ENCODE measurements at regions of chr5 and their contacts with region 1.

Region 1: DNA sequence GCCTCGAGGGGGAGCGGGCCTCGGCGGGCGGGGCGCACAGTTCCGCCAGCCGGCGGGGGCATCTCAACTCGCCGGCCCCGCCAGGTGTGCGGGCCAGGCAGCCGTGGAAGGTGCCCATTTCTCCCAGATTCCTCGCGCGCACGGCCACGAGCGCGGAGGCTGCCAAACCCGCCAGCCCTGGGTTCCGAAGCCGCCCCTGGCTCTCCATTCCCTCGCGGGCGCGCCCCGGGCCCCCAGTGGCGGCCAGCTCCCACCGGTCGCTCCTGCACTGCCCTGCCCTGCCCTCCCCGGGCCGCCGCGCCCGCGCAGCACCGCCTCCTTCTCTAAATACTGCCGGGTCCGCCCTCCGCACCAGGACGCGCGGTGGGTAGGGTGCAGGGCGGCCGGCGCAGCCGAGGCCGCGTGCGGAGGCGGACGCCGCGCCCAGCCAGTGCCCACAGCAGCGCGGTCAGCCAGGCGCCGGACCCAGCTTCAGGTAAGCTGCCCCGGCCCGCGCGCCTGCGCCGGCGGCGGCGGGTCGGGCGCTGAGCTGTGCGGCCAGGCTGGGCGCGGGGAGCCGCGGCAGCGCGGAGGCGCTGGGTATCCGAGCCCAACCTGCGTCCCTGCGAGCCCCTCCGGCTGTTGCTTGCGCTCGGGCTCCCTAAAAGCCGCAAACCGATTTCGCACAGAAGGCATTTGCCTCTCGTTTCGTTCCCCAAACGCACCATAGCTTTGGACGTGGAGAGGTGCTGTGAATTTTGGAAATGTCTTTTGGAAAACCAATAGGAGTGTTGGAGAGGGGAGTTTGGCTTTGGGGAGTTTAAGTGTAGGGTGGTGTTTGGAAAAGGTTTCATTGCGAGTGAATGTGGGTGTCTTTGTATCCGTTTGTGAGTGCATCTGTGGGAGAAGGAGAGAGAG is at the start of gene TMEM171:
- DNase-seq: peak; percentile 66 to 79
- H3K4me3 ChIP-seq: peak within 1 kb of the TSS; percentile 100
- H3K27ac ChIP-seq: peak within 1 kb of the TSS; percentile 92
- H3K4me1 ChIP-seq: peaks cover 47% of the 10 kb centered on the region
- H3K27me3 ChIP-seq: no peaks in the 10 kb centered on the region
- CTCF ChIP-seq: no peak
- total RNA-seq, gene TMEM171: 7.8 and 9.9 TPM in 2 replicates

Region 2: DNA sequence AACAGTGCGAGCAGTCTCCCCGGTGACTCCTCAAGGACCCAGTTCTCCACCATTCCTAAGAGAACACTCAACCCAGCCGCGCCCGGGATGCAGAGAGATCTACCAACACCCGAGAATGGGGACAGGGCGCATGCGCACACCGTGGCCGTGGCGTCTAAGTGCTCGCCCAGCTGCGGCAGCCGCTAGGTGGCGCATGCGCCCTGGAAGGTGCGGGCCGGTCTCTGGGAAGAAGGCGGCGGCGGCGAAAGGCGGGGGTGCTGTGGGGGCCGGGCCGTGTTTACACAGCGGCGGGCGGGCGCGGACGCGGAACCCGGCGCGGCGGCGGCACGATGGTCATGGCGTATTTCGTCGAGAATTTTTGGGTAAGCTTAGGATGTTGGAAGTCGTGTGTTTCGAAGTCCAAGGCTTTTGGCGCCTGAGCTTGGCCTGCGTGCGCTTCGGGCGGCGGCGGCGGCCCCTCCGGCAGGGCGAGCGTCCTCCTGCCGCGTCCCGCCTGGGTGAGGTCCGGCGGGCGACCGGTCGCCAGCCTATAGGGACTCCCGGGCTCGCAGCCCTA is 164.6 kb before region 1 on chr5 and contains the start of gene FCHO2:
- CTCF ChIA-PET with region 1: no interaction called
- POLR2A ChIA-PET with region 1: no interaction called
- intact Hi-C with region 1: loop called (anchors 5 kb)
- DNase-seq: peak; percentile 95 to 97
- H3K4me3 ChIP-seq: peak within 1 kb of the TSS; percentile 74
- H3K27ac ChIP-seq: peak within 1 kb of the TSS; percentile 99
- H3K4me1 ChIP-seq: peaks cover 58% of the 10 kb centered on the region
- H3K27me3 ChIP-seq: no peaks in the 10 kb centered on the region
- CTCF ChIP-seq: peak; percentile 84
- total RNA-seq, gene FCHO2: 13.6 and 26.1 TPM in 2 replicates

Region 3: DNA sequence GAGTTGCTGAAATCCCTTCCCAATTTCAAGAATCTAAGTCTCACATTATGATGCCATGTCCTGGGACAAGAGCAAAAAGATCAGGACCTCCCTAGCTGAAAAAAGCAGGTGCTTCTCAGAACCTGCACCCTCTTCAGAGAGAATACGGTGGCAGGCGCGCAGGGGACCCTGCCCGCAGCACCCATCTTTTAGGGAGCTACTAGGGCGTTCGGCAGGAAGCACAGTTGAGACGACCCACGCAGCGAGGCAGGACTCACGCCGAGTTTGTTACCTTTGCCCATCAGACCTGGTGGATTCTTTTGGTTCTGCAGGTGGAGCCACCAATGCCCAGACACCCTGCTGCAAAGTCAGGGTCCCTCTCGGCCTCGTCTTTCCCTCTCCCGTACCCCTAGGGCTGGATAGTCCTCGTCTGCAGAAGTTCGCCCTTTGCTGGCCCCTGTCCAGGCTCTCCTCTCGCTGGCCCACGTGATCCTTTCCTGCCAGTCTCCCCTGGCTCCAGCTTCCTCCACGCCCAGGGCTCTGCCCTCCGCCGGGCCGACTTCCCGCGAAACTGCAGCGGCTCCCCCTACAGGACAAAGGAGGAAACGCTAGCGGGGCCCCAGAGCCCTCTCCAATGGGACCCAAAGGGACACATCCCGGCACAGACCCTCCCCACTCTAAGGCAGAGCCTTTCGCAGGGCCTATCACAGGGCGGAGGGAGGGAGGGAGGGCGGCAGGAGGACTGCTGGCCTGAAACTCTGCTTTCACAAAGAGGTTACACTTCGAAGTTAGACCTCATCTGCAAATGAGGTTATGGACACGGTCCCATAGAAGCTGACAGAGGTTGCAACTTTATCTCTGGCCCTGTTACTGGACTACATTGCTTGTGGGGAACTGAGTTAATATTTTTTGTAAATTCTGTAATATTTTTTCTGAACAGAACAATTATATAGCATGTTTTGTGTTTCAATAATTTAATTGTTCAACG is 81.4 kb after region 1 on chr5:
- CTCF ChIA-PET with region 1: no interaction called
- POLR2A ChIA-PET with region 1: no interaction called
- intact Hi-C with region 1: no loop called
- DNase-seq: peak; percentile 53 to 70
- H3K4me3 ChIP-seq: no peak overlapping the region
- H3K27ac ChIP-seq: no peak overlapping the region
- H3K4me1 ChIP-seq: no peaks in the 10 kb centered on the region
- H3K27me3 ChIP-seq: no peaks in the 10 kb centered on the region
- CTCF ChIP-seq: peak; percentile 89

Region 4: DNA sequence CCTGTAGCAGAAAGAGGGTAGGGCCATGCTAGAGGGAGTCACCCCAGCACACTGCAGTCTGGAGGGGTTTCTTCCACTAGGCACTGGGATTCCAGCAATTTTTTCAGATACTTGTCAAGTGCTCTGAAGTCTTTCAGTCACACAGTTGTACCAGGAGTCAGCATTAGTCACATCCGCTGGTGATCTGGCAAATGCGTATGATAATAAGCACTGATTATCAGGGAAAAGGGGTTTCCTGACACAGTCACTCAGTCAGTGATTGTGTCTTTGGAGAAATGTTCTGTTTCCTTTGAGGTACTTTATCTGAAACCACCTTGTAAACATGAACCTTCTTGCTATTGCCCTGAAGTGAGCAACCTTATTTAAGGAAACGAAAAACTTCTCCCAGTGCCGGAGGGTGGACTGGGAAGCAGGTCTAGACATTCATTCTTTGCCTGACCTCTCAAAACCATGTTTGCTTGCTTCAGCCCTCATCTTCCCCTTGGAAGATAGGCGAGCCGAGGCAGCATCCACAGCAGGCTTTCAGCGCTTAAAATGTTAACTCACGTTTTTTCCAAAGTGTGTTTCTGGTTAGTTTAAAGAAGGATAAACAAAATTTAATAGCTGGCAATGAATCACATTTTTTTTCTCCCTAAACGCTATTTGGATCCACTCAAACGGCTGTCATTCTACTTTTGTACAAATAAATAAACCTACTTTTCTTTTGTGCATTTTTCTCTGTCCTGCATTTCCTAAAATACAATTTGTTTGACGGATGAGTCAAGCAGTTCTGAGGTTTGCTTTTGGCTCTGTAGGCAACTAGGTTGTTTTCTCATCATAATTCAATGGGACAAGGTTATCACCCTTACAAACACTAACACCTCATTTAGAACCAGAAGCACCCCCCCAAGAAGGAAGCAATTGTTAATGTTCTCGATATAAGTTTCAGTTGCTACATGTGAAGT is 250.4 kb after region 1 on chr5:
- CTCF ChIA-PET with region 1: no interaction called
- POLR2A ChIA-PET with region 1: no interaction called
- intact Hi-C with region 1: loop called (anchors 5 kb)
- DNase-seq: peak; percentile 58 to 98
- H3K4me3 ChIP-seq: peak overlapping the region; percentile 30; the same call in 1 of the 2 replicates
- H3K27ac ChIP-seq: peak overlapping the region; percentile 94
- H3K4me1 ChIP-seq: peaks cover 71% of the 10 kb centered on the region
- H3K27me3 ChIP-seq: no peaks in the 10 kb centered on the region
- CTCF ChIP-seq: no peak

Region 5: GRCh38 chr5:73381590-73382400 is 261.3 kb after region 1 on chr5:
- CTCF ChIA-PET with region 1: no interaction called
- POLR2A ChIA-PET with region 1: no interaction called
- intact Hi-C with region 1: no loop called
- DNase-seq: no peak
- H3K4me3 ChIP-seq: no peak overlapping the region
- H3K27ac ChIP-seq: no peak overlapping the region
- H3K4me1 ChIP-seq: peaks cover 7% of the 10 kb centered on the region; the same call in 1 of the 2 replicates
- H3K27me3 ChIP-seq: no peaks in the 10 kb centered on the region
- CTCF ChIP-seq: no peak

Measured in PC-9 (cell line).